ENCODE measurements at regions of chr3 and their contacts with region 1.

Region 1: DNA sequence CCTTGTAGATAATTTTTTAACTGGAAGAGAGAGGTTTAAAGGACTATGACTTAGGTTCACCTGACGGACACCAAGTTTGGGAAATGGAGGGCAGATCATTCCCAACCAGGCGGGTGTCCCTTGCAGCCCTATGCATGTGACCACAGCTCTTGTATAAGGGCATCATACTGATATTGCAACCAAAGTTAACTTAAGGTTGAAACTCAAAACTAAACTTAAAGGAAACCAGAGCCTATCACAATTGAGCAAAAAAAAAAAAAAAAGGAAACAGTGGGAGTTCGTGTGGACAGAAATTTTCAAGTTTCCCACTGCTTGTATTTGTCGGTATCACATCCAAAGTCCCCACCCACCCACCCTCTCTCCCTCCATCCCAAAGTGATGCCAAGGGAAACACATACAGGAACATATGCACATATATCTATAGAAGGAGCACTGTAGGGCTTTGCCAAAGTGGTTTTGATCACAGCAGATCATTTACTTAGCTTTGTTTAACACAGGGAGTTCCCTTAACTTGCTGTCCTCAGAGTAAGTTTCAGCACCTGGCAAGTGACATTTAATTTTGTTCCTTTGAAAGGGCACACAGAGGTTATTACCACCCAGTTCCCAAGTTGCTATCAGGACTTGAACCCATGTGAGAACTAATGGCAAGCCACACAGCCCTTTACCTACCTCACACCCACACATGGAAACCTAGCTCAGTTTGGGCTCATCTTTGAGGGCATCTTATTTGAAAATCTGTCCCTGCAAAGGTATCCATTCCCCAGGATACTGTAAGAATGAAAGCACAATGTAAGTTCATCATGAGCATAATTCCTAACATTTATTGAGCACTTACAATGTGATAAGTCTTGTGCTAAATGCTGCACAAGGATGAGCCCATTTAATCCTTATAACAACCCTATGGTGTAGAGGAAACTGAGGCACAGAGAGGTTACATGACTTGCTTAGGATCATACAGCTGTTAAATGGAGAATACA is 204.5 kb upstream of the CMC1 start:
- DNase-seq: no peak
- ATAC-seq: peak; percentile 83
- H3K4me3 ChIP-seq: no peak overlapping the region
- H3K27ac ChIP-seq: no peak overlapping the region
- H3K4me1 ChIP-seq: no peaks in the 10 kb centered on the region
- H3K27me3 ChIP-seq: no peaks in the 10 kb centered on the region
- CTCF ChIP-seq: no peak
- EP300 ChIP-seq: peak in 1 of 2 experiments; percentile 34; a peak in 1 of 4 replicates
- POLR2A ChIP-seq: no peak
- RAD21 ChIP-seq: no peak

Region 2: DNA sequence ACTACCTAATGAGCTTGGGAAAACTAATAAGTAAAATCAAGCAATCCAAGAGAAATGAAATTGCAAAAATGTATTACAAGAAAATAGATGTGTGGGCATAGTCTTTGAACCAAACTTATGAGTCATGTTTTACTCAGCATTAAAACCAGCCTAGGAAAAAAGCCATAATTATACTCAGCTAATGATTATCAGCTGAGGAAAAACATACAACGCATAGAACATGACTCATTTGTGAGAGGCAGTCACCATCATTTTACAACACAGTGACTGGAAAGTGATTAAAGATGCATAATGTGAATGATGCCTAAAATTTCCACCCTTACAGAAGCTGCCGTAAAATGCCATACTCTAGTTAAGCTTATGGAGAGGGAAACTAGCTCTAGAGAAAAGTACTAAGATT is 76.8 kb before region 1 on chr3:
- CTCF ChIA-PET with region 1: no interaction called
- POLR2A ChIA-PET with region 1: no interaction called
- RAD21 ChIA-PET with region 1: interaction called, 3 read pairs
- SMC1A ChIA-PET with region 1: interaction called, 11 read pairs
- in situ Hi-C with region 1: no loop called
- intact Hi-C with region 1: no loop called
- DNase-seq: no peak
- ATAC-seq: peak; percentile 35
- H3K4me3 ChIP-seq: no peak overlapping the region
- H3K27ac ChIP-seq: no peak overlapping the region
- H3K4me1 ChIP-seq: no peaks in the 10 kb centered on the region
- H3K27me3 ChIP-seq: no peaks in the 10 kb centered on the region
- CTCF ChIP-seq: no peak
- EP300 ChIP-seq: no peak
- POLR2A ChIP-seq: no peak
- RAD21 ChIP-seq: no peak

Region 3: DNA sequence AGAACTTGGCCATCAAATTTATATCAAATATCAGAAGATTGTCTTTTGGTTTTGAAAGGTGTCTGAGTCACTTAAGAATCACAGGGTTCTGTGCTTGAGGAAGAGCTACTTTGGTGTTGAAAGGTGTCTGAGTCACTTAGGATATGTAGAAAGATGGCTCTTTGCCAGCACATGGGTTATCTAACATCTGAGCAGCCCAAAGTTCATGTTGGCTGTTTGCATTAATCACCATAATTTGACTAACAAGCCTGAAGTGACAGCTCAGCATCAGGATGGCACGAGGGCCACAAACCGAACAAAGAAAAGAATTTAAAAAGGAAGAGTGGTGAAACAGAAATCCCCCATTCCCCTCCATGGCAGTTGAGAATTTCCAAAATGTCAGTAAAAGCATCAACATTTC is 14.0 kb after region 1 on chr3:
- CTCF ChIA-PET with region 1: interaction called, 5 read pairs
- POLR2A ChIA-PET with region 1: interaction called, 8 read pairs
- RAD21 ChIA-PET with region 1: interaction called, 46 read pairs
- SMC1A ChIA-PET with region 1: interaction called, 46 read pairs
- in situ Hi-C with region 1: no loop called
- intact Hi-C with region 1: no loop called
- DNase-seq: no peak
- ATAC-seq: peak; percentile 70
- H3K4me3 ChIP-seq: no peak overlapping the region
- H3K27ac ChIP-seq: no peak overlapping the region
- H3K4me1 ChIP-seq: no peaks in the 10 kb centered on the region
- H3K27me3 ChIP-seq: no peaks in the 10 kb centered on the region
- CTCF ChIP-seq: no peak
- EP300 ChIP-seq: 0 out of 4 replicates have a peak, but pooled peaks of 1 of the 2 experiments have one; percentile 6
- POLR2A ChIP-seq: no peak
- RAD21 ChIP-seq: no peak

Region 4: DNA sequence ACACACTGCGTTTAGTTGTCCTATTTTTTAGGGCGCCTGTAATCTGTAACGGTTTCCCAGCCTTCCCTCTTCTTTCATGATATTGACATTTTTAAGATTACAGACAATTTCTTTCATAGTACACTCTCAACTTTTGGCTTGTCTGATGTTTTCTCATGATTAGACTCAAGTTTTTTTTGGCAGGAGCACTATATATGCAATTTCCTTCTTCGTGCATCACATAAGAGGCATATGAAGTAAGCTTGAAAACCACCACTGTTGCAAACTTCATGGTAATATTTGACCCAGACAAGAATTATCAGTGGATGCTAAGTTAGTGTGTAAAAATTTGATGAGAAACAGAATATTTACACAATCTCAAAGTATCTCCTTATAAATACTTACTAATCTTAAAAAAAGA is 85.3 kb after region 1 on chr3:
- CTCF ChIA-PET with region 1: interaction called, 3 read pairs
- POLR2A ChIA-PET with region 1: interaction called, 4 read pairs
- RAD21 ChIA-PET with region 1: interaction called, 12 read pairs
- SMC1A ChIA-PET with region 1: interaction called, 40 read pairs
- in situ Hi-C with region 1: no loop called
- intact Hi-C with region 1: loop called (anchors 2 kb)
- DNase-seq: no peak
- ATAC-seq: no peak
- H3K4me3 ChIP-seq: no peak overlapping the region
- H3K27ac ChIP-seq: no peak overlapping the region
- H3K4me1 ChIP-seq: no peaks in the 10 kb centered on the region
- H3K27me3 ChIP-seq: no peaks in the 10 kb centered on the region
- CTCF ChIP-seq: no peak
- EP300 ChIP-seq: no peak
- POLR2A ChIP-seq: no peak
- RAD21 ChIP-seq: no peak

Region 5: GRCh38 chr3:28241221-28242160 is 204.6 kb after region 1 on chr3 and contains the start of gene CMC1:
- CTCF ChIA-PET with region 1: no interaction called
- POLR2A ChIA-PET with region 1: interaction called, 3 read pairs
- RAD21 ChIA-PET with region 1: no interaction called
- SMC1A ChIA-PET with region 1: interaction called, 3 read pairs
- in situ Hi-C with region 1: no loop called
- intact Hi-C with region 1: loop called (anchors 5 kb)
- DNase-seq: peak; percentile 85
- ATAC-seq: peak; percentile 95
- H3K4me3 ChIP-seq: peak within 1 kb of the TSS; percentile 81
- H3K27ac ChIP-seq: peak within 1 kb of the TSS; percentile 79
- H3K4me1 ChIP-seq: no peaks in the 10 kb centered on the region
- H3K27me3 ChIP-seq: no peaks in the 10 kb centered on the region
- CTCF ChIP-seq: no peak
- EP300 ChIP-seq: peak; percentile 24 to 28; a peak in 2 of 4 replicates
- POLR2A ChIP-seq: peak; percentile 84
- RAD21 ChIP-seq: no peak
- polyA plus RNA-seq, gene CMC1: 26.9 to 41.2 TPM

Measured in GM12878 (cell line).